ENCODE measurements at regions of chr15 and their contacts with region 1.

Region 1: DNA sequence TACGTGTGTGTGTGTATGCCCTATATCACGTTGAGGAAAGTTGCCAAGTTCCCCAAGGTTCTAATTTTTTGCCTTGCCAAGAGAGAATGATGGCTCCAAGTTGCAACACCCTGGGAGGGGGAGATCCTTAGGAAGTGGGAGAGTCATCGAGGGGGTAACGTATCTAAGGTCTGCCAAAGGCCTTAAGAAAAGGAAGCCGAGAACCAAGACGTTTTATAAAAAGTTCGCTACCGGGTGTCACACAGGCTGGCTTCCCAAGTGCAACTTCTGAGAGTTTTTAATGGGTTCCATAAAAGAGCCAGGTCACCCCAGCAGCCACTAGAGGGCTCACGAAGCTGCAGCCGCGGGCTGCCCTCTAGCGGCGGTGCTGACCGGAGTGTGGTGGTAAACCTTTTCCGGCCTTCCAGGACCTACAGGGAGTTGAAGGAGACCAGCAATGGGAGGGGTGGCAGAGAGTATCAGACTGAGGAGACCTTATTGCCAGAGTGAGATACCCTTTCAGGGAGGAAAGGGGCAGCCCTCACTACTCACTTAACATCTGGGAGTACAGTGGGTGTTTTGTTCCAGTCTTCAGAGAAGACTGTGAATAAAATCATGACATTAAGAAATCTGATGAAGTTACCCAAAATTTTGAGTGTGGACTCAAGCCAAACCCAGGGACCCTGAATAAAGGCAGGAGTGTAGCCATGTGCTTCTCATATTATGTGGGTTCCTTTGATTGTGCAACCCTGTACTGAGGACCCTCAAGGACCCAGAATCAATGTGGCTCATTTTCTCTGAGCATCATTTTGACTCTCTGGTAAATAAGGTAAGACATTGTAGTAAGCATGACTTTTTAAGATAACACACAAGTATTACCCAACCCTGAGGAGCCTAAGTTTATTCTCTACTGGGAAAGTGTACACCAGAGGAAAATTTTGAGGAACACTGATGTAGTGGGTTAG is 2.5 kb upstream of the RFX7 start:
- DNase-seq: peak; percentile 72 to 92 (median 88)
- ATAC-seq: peak; percentile 74
- H3K4me3 ChIP-seq: peak overlapping the region; percentile 66 to 76
- H3K4me3 Mint-ChIP-seq: peak overlapping the region; percentile 92
- H3K27ac ChIP-seq: peak overlapping the region; percentile 33 to 69
- H3K27ac Mint-ChIP-seq: peak overlapping the region; percentile 95
- H3K4me1 ChIP-seq: peaks cover 28% of the 10 kb centered on the region
- H3K4me1 Mint-ChIP-seq: peaks cover 36% of the 10 kb centered on the region
- H3K27me3 ChIP-seq: no peaks in the 10 kb centered on the region
- H3K27me3 Mint-ChIP-seq: no peaks in the 10 kb centered on the region
- CTCF ChIP-seq: peak; percentile 100

Region 2: GRCh38 chr15:55494931-55495330 is 751.2 kb before region 1 on chr15:
- CTCF ChIA-PET with region 1: no interaction called
- POLR2A ChIA-PET with region 1: no interaction called
- intact Hi-C with region 1: loop called in 1 of 2 experiments (anchors 10 kb)
- DNase-seq: peak in 1 of 9 experiments; percentile 27
- ATAC-seq: peak; percentile 16
- H3K4me3 ChIP-seq: no peak overlapping the region
- H3K4me3 Mint-ChIP-seq: no peak overlapping the region
- H3K27ac ChIP-seq: no peak overlapping the region
- H3K27ac Mint-ChIP-seq: no peak overlapping the region
- H3K4me1 ChIP-seq: peaks cover 9% of the 10 kb centered on the region
- H3K4me1 Mint-ChIP-seq: peaks cover 9% of the 10 kb centered on the region
- H3K27me3 ChIP-seq: no peaks in the 10 kb centered on the region
- H3K27me3 Mint-ChIP-seq: no peaks in the 10 kb centered on the region
- CTCF ChIP-seq: no peak

Region 3: DNA sequence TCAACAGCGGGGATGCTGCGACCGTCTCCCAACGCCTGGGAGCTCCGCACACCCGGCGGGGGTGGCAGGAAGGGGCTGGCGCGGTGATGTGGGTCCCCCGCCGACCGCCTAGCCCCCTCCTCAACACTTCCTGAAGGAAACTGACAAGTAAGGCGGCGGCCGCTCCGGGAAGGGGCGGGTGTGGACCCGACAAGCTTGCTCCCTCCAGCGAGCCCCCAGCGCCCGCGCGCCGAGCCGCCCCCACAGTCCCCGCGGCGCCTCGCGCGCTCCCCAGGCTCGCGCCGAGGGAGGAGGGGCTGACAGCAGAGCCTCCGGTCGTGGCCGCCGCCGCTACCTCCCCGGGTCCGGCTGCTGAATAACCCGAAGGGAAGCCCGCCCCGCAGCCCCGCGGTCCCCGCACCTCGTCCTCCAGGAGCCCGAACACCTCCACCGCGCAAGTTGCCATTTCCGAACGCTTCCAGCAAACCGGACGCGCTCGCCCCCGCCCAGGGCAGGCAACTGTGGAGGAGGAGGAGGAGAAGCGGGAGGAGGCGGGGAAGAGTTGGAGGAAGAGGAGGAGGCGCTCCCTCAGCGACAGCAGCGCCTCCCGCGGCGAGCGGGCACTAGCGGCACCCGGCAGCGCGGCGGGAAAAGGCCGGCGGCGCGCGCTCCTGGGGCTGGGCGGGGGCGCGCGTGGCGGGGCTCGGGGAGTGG is 252.9 kb before region 1 on chr15 and contains the start of gene NEDD4:
- CTCF ChIA-PET with region 1: interaction called, 3 read pairs
- POLR2A ChIA-PET with region 1: no interaction called
- intact Hi-C with region 1: loop called in 1 of 2 experiments (anchors 2 kb)
- DNase-seq: peak; percentile 28 to 87 (median 69)
- ATAC-seq: peak; percentile 81
- H3K4me3 ChIP-seq: peak within 1 kb of the TSS; percentile 77 to 90
- H3K4me3 Mint-ChIP-seq: peak within 1 kb of the TSS; percentile 92
- H3K27ac ChIP-seq: no peak within 1 kb of the TSS
- H3K27ac Mint-ChIP-seq: peak within 1 kb of the TSS; percentile 25
- H3K4me1 ChIP-seq: peaks cover 5% of the 10 kb centered on the region
- H3K4me1 Mint-ChIP-seq: peaks cover 13% of the 10 kb centered on the region
- H3K27me3 ChIP-seq: no peaks in the 10 kb centered on the region
- H3K27me3 Mint-ChIP-seq: no peaks in the 10 kb centered on the region
- CTCF ChIP-seq: no peak
- total RNA-seq, gene NEDD4: 0.89 to 1.4 TPM

Region 4: GRCh38 chr15:56124391-56124790 is 121.8 kb before region 1 on chr15:
- CTCF ChIA-PET with region 1: no interaction called
- POLR2A ChIA-PET with region 1: no interaction called
- intact Hi-C with region 1: loop called in 1 of 2 experiments (anchors 5 kb)
- DNase-seq: no peak
- ATAC-seq: no peak
- H3K4me3 ChIP-seq: no peak overlapping the region
- H3K4me3 Mint-ChIP-seq: no peak overlapping the region
- H3K27ac ChIP-seq: no peak overlapping the region
- H3K27ac Mint-ChIP-seq: no peak overlapping the region
- H3K4me1 ChIP-seq: no peaks in the 10 kb centered on the region
- H3K4me1 Mint-ChIP-seq: no peaks in the 10 kb centered on the region
- H3K27me3 ChIP-seq: no peaks in the 10 kb centered on the region
- H3K27me3 Mint-ChIP-seq: no peaks in the 10 kb centered on the region
- CTCF ChIP-seq: no peak

Region 5: GRCh38 chr15:56234804-56235203 is 11.3 kb before region 1 on chr15:
- CTCF ChIA-PET with region 1: no interaction called
- POLR2A ChIA-PET with region 1: no interaction called
- intact Hi-C with region 1: no loop called
- DNase-seq: no peak
- ATAC-seq: no peak
- H3K4me3 ChIP-seq: no peak overlapping the region
- H3K4me3 Mint-ChIP-seq: no peak overlapping the region
- H3K27ac ChIP-seq: no peak overlapping the region
- H3K27ac Mint-ChIP-seq: no peak overlapping the region
- H3K4me1 ChIP-seq: no peaks in the 10 kb centered on the region
- H3K4me1 Mint-ChIP-seq: peaks cover 37% of the 10 kb centered on the region
- H3K27me3 ChIP-seq: no peaks in the 10 kb centered on the region
- H3K27me3 Mint-ChIP-seq: no peaks in the 10 kb centered on the region
- CTCF ChIP-seq: no peak

Region 6: GRCh38 chr15:56428821-56429458 is 182.8 kb after region 1 on chr15:
- CTCF ChIA-PET with region 1: no interaction called
- POLR2A ChIA-PET with region 1: no interaction called
- intact Hi-C with region 1: loop called in 1 of 2 experiments (anchors 5 kb)
- DNase-seq: peak in 2 of 9 experiments; percentile 6 to 29
- ATAC-seq: no peak
- H3K4me3 ChIP-seq: no peak overlapping the region
- H3K4me3 Mint-ChIP-seq: no peak overlapping the region
- H3K27ac ChIP-seq: no peak overlapping the region
- H3K27ac Mint-ChIP-seq: no peak overlapping the region
- H3K4me1 ChIP-seq: no peaks in the 10 kb centered on the region
- H3K4me1 Mint-ChIP-seq: no peaks in the 10 kb centered on the region
- H3K27me3 ChIP-seq: peaks cover 0 to 2% of the 10 kb centered on the region in 2 experiments
- H3K27me3 Mint-ChIP-seq: peaks cover 6% of the 10 kb centered on the region
- CTCF ChIP-seq: peak; percentile 31

Region 7: GRCh38 chr15:56918046-56918938 is 672.1 kb after region 1 on chr15 and contains the start of gene TCF12:
- CTCF ChIA-PET with region 1: no interaction called
- POLR2A ChIA-PET with region 1: no interaction called
- intact Hi-C with region 1: loop called in 1 of 2 experiments (anchors 5 kb)
- DNase-seq: peak; percentile 76 to 96 (median 88)
- ATAC-seq: peak; percentile 70
- H3K4me3 ChIP-seq: peak within 1 kb of the TSS; percentile 89 to 96
- H3K4me3 Mint-ChIP-seq: peak within 1 kb of the TSS; percentile 88
- H3K27ac ChIP-seq: peak within 1 kb of the TSS; percentile 64 to 84
- H3K27ac Mint-ChIP-seq: peak within 1 kb of the TSS; percentile 93
- H3K4me1 ChIP-seq: peaks cover 25% of the 10 kb centered on the region
- H3K4me1 Mint-ChIP-seq: peaks cover 46% of the 10 kb centered on the region
- H3K27me3 ChIP-seq: no peaks in the 10 kb centered on the region
- H3K27me3 Mint-ChIP-seq: no peaks in the 10 kb centered on the region
- CTCF ChIP-seq: peak; percentile 50
- total RNA-seq, gene TCF12: 45.0 to 47.2 TPM

Measured in CD8-positive, alpha-beta T cell (primary cell).